Heart left ventricle (tissue), 16 donors: ENCODE measurements at regions of chr4 and their contacts with region 1.

Region 1: GRCh38 chr4:155657169-155657568 is 9.5 kb upstream of the GUCY1A1 start:
- DNase-seq: no peak
- ATAC-seq: no peak
- H3K4me3 ChIP-seq: no peak overlapping the region
- H3K27ac ChIP-seq: no peak overlapping the region
- H3K4me1 ChIP-seq: peaks cover 0 to 17% (median 7%) of the 10 kb centered on the region in 12 donors
- H3K27me3 ChIP-seq: no peaks in the 10 kb centered on the region
- CTCF ChIP-seq: no peak
- POLR2A ChIP-seq: no peak

Region 2: DNA sequence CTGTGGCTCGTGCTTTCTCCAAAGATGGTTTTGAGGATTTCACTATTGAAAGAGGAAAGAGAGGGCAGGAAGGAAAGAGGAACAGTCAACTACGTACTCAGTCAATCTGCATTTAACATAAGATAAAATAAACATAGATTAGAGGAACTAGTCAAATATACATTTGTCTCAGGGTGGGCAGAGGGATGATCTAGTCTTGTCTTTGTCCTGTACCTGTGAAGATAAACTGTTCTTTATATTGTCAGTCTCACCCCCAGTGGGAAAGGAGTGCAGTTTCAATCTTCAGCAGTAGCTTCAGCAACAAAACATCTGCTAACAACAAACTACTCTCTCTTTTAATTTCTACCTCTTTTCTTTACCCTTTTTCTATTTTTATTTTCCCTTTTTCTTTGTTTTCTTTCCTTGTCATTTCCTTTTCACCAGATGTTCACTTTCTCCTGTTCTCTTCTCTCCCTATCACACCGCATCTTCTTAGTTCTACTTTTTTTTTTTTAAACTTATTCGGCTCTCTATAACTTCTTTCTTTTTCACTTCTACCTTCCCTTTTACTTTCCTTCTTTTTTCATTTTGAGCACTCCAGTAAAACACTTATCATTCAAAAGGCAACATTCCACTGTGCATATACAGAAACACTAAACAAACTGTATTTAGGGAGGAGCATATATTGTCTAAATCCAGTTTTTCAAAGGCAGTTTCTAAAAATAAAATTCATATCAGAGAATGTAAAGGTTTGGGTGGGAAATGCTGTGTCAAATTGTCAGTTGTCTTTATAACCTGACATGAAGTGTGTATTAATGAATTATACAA is 41.9 kb before region 1 on chr4:
- intact Hi-C with region 1: loop called in 2 of 10 experiments (anchors 5 kb)
- DNase-seq: no peak
- ATAC-seq: no peak
- H3K4me3 ChIP-seq: peak overlapping the region in 1 of 12 donors; percentile 7
- H3K27ac ChIP-seq: peak overlapping the region in 10 of 12 donors; percentile 1 to 76 (median 36)
- H3K4me1 ChIP-seq: peaks cover 0 to 40% (median 3%) of the 10 kb centered on the region in 12 donors
- H3K27me3 ChIP-seq: no peaks in the 10 kb centered on the region
- CTCF ChIP-seq: no peak
- POLR2A ChIP-seq: no peak

Region 3: GRCh38 chr4:155624478-155624877 is 32.7 kb before region 1 on chr4:
- intact Hi-C with region 1: loop called in 2 of 10 experiments (anchors 5 kb)
- DNase-seq: no peak
- ATAC-seq: no peak
- H3K4me3 ChIP-seq: no peak overlapping the region
- H3K27ac ChIP-seq: no peak overlapping the region
- H3K4me1 ChIP-seq: peaks cover 0 to 16% (median 0%) of the 10 kb centered on the region in 12 donors
- H3K27me3 ChIP-seq: no peaks in the 10 kb centered on the region
- CTCF ChIP-seq: no peak
- POLR2A ChIP-seq: no peak

Region 4: DNA sequence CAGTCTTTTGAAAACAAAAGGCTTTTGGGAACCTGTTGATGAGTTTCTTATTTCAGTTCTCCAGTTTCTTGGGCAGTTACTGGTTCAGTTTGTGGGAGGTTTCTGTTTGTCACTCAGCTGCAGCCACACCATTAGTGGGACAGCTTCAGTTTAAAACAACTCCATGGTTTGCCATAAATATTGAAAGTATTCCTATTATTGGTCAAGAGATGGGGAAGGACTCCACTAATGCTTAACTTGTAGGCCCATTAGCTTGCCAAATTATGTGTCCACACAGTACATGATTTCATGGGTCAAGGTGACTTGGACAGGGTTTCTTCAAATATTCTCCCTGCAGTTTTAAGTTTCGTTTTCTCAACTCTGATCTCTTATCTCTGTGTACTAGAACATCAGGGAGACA is 224.4 kb after region 1 on chr4:
- intact Hi-C with region 1: no loop called
- DNase-seq: no peak
- ATAC-seq: no peak
- H3K4me3 ChIP-seq: no peak overlapping the region
- H3K27ac ChIP-seq: no peak overlapping the region
- H3K4me1 ChIP-seq: no peaks in the 10 kb centered on the region
- H3K27me3 ChIP-seq: no peaks in the 10 kb centered on the region
- CTCF ChIP-seq: no peak
- POLR2A ChIP-seq: no peak